ENCODE measurements at regions of chr19 and their contacts with region 1.

Region 1: DNA sequence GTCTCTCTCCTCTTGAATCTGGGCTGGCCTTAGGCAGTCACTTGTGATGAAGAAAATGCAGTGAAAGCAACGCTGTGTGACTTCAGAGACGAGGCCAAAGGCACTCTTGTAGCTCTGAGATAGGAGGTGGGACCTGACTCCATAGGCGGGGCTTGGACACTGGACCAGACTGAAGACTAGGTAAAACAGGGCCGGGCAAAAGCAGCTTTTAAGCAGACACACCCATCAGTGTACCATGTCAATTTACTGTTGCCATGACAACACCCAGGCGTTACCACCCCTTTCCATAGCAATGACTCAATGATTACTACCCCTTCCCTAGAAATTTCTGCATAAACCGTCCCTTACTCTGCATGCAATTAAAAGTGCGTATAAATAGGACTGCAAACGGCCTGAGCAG is 6.6 kb upstream of the EID2 start:
- DNase-seq: no peak
- ATAC-seq: no peak
- H3K4me3 ChIP-seq: no peak overlapping the region
- H3K4me3 Mint-ChIP-seq: no peak overlapping the region
- H3K27ac ChIP-seq: no peak overlapping the region
- H3K27ac Mint-ChIP-seq: no peak overlapping the region
- H3K4me1 ChIP-seq: peaks cover 32% of the 10 kb centered on the region
- H3K4me1 Mint-ChIP-seq: peaks cover 39% of the 10 kb centered on the region
- H3K27me3 ChIP-seq: no peaks in the 10 kb centered on the region
- H3K27me3 Mint-ChIP-seq: no peaks in the 10 kb centered on the region
- CTCF ChIP-seq: no peak

Region 2: DNA sequence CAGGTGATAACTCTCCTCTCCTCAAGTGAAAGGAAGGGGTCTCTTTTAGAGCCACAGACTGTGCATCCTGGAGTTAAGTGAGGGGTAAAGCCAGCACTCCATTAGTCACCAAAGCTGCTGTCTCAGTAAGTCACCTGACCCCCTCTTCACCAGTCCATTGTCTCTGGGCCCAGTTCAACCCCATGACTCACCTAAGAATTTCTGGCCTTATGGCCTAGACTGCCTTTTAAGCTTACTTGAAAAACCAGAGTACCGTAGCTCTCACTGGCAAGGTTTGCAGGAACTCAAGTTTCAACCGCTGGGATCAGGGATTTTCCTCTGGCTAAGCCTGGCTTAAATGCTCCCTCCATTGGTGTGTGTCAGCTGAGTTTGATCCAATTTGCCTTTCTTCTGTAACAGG is 16.8 kb after region 1 on chr19:
- CTCF ChIA-PET with region 1: interaction called, 29 read pairs
- POLR2A ChIA-PET with region 1: no interaction called
- intact Hi-C with region 1: no loop called
- DNase-seq: no peak
- ATAC-seq: no peak
- H3K4me3 ChIP-seq: no peak overlapping the region
- H3K4me3 Mint-ChIP-seq: no peak overlapping the region
- H3K27ac ChIP-seq: no peak overlapping the region
- H3K27ac Mint-ChIP-seq: peak overlapping the region; percentile 20
- H3K4me1 ChIP-seq: peaks cover 6% of the 10 kb centered on the region
- H3K4me1 Mint-ChIP-seq: peaks cover 9% of the 10 kb centered on the region
- H3K27me3 ChIP-seq: no peaks in the 10 kb centered on the region
- H3K27me3 Mint-ChIP-seq: peaks cover 5% of the 10 kb centered on the region
- CTCF ChIP-seq: no peak

Region 3: GRCh38 chr19:39765091-39766076 is 218.8 kb after region 1 on chr19:
- CTCF ChIA-PET with region 1: interaction called, 4 read pairs
- POLR2A ChIA-PET with region 1: no interaction called
- intact Hi-C with region 1: loop called in 1 of 2 experiments (anchors 1 kb)
- DNase-seq: peak in 8 of 9 experiments; percentile 7 to 65 (median 49)
- ATAC-seq: no peak
- H3K4me3 ChIP-seq: no peak overlapping the region
- H3K4me3 Mint-ChIP-seq: no peak overlapping the region
- H3K27ac ChIP-seq: no peak overlapping the region
- H3K27ac Mint-ChIP-seq: no peak overlapping the region
- H3K4me1 ChIP-seq: no peaks in the 10 kb centered on the region
- H3K4me1 Mint-ChIP-seq: no peaks in the 10 kb centered on the region
- H3K27me3 ChIP-seq: no peaks in the 10 kb centered on the region
- H3K27me3 Mint-ChIP-seq: peaks cover 13% of the 10 kb centered on the region
- CTCF ChIP-seq: peak; percentile 73

Region 4: DNA sequence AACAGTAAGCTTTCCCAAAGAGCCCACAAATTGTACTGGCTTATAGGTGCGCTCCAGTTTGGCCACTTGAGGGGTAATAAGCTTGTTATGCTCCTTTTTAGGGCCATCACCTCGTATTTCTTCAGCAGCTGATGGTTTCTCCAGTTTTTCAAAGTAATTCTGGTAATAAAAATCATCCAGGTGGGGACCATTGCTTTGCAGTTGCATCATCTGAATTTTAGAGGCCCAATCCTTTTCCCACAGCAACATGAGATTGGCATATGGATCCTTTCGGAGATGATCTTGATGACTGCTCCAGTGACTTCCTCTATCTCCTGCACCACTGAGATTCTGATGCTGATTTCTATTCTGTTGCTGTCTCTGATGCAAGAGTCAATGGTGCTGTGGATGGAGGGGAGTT is 477.4 kb after region 1 on chr19:
- CTCF ChIA-PET with region 1: no interaction called
- POLR2A ChIA-PET with region 1: no interaction called
- intact Hi-C with region 1: no loop called
- DNase-seq: no peak
- ATAC-seq: no peak
- H3K4me3 ChIP-seq: peak overlapping the region in 1 of 2 experiments; percentile 8
- H3K4me3 Mint-ChIP-seq: no peak overlapping the region
- H3K27ac ChIP-seq: no peak overlapping the region
- H3K27ac Mint-ChIP-seq: no peak overlapping the region
- H3K4me1 ChIP-seq: no peaks in the 10 kb centered on the region
- H3K4me1 Mint-ChIP-seq: no peaks in the 10 kb centered on the region
- H3K27me3 ChIP-seq: no peaks in the 10 kb centered on the region
- H3K27me3 Mint-ChIP-seq: no peaks in the 10 kb centered on the region
- CTCF ChIP-seq: no peak